PC-9 (cell line): ENCODE measurements at regions of chr10 and their contacts with region 1.

Region 1: DNA sequence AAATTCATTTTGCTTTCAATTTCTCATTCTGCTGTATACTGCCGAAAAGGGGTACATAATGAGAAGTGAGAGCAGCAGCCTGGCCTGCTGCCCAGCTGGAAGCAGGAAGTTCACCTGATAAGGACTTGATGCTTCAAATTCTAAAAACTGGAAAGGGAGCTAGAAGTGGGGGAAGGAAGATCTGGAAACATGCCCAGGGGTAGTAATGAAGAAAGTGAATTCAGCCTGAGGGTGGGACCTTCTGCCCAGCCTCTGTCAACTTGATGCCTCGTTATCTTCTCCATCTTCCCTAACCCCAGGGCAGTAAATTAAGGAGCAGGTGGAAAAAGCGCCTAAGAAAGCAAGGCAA is 69.4 kb downstream of the ARMH3 start:
- DNase-seq: peak in 1 of 2 experiments; percentile 22
- H3K4me3 ChIP-seq: no peak overlapping the region
- H3K27ac ChIP-seq: no peak overlapping the region
- H3K4me1 ChIP-seq: no peaks in the 10 kb centered on the region
- H3K27me3 ChIP-seq: no peaks in the 10 kb centered on the region
- CTCF ChIP-seq: no peak

Region 2: DNA sequence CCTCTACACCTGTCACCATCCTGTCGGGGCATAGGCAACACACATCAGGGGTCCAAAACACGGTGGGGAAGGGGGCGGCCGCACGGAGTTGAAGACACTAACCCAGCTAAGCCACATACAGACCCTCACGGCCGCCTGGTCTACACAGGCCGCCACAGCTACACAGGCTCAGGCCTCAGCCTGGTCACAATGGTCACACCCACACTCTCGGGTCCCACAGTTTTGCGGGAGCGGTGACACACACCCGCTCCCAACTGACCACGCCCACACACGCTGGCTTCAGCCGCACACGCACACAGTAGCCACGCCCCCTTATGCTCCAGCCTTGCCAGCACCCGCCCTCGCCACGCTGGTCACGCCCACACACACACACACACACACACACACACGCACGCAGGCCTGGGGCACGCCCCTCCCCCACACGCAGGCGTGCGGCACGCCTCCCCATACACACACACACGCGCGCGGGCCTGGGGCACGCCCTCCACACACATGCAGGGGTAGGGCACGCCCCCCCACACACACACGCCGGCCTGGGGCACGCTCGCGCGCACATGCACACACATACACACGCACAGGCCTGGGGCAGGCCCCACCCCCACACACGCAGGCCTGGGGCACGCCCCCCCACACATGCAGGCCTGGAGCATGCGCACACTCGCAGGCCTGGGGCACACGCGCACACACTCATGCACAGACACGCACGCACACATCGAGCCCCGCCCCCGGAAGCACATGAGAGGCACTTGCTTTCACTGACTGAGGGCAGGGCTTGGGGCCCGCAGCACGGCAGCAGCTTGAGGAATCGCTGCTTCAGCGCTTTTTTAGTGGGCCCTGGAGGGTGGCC is 156.1 kb before region 1 on chr10:
- CTCF ChIA-PET with region 1: no interaction called
- POLR2A ChIA-PET with region 1: interaction called, 19 read pairs
- intact Hi-C with region 1: no loop called
- DNase-seq: peak; percentile 51 to 74
- H3K4me3 ChIP-seq: peak overlapping the region; percentile 40; the same call in 1 of the 2 replicates
- H3K27ac ChIP-seq: 0 out of 2 replicates have a peak overlapping the region, but pooled peaks have one; percentile 26
- H3K4me1 ChIP-seq: 0 out of 2 replicates have a peak, but pooled peaks cover 9% of the 10 kb centered on the region
- H3K27me3 ChIP-seq: no peaks in the 10 kb centered on the region
- CTCF ChIP-seq: no peak